Heart right ventricle (tissue), 16 donors: ENCODE measurements at regions of chr3 and their contacts with region 1.

Region 1: GRCh38 chr3:172968646-172969045 is 172.4 kb downstream of the SPATA16 start:
- DNase-seq: no peak
- ATAC-seq: no peak
- H3K4me3 ChIP-seq: no peak overlapping the region
- H3K27ac ChIP-seq: no peak overlapping the region
- H3K4me1 ChIP-seq: no peaks in the 10 kb centered on the region
- H3K27me3 ChIP-seq: no peaks in the 10 kb centered on the region
- CTCF ChIP-seq: no peak

Region 2: DNA sequence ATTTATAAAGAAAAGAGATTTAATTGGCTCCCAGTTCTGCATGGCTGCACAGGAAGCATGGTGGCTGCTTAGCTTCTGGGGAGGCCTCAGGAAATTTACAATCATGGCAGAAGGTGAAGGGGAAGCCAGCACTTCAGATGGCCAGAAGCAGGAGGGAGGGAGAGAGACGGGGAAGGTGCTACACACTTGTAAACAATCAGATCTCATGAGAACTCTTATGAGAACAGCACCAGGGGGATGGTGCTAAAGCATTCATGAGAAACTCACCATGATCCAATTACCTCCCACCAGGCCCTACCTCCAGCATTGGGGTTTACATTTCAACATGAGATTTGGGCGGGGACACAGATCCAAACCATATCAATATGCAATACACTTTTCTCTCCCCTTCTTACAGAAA is 144.4 kb before region 1 on chr3:
- intact Hi-C with region 1: no loop called
- DNase-seq: no peak
- ATAC-seq: no peak
- H3K4me3 ChIP-seq: no peak overlapping the region
- H3K27ac ChIP-seq: no peak overlapping the region
- H3K4me1 ChIP-seq: no peaks in the 10 kb centered on the region
- H3K27me3 ChIP-seq: no peaks in the 10 kb centered on the region
- CTCF ChIP-seq: no peak

Region 3: DNA sequence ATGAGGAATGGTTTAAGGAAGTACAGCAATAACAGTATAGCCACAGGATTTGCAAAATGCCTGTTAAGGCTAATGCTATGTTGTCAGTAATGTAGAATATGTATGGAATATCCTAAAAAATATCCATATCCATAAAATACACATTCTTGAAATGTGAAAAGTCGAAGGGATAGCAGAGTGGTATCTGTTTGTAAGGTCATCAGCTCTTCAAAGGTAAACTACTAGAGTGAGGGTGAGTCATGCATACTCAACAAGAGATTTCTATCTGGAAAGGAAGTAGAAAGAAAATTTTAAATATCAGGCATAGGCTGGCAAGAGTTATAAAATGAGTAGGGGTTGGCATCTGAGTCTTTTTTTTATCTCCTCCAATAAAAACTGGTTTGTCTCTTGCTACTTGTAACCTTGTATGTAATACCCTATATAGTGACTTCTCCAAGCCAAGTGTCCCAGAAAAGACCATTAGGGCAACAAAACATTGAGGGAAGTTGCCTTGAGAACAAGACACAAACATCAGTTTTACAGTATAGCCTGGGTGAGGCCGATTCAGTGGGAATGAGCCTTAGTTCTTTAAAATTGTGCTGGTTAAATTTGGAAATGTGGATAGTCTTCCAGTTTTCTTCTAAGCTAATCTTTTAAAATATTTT is 69.3 kb after region 1 on chr3:
- intact Hi-C with region 1: loop called in 1 of 10 experiments (anchors 2 kb)
- DNase-seq: no peak
- ATAC-seq: peak in 4 of 8 donors; percentile 30 to 55 (median 36)
- H3K4me3 ChIP-seq: no peak overlapping the region
- H3K27ac ChIP-seq: peak overlapping the region in 9 of 10 donors; percentile 10 to 76 (median 50)
- H3K4me1 ChIP-seq: peaks cover 0 to 24% (median 4%) of the 10 kb centered on the region in 9 donors
- H3K27me3 ChIP-seq: no peaks in the 10 kb centered on the region
- CTCF ChIP-seq: no peak